ENCODE measurements at regions of chr3 and their contacts with region 1.

Region 1: DNA sequence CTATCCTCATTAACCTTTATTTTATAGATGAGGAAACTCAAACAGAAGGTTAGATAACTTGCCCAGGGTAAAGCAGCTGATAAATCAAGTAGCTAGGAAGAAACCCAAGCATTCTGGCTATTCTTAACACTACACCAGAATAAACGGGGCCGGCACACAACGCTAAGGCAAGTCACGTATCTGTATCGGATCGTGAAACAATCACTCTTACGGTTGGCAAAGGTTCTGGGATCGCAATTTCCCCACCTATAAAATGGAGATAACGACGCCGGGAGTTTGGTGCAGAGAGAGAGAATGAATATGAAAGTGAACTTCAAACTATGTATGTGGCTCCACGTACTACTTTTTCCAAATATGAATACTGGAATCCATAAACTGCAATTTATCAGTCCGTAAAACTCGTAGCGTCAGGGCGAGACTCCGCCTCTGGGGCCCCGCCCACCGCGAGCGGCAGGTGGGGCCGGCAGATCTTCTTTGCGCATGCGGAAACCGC is 252 bp upstream of the ARMC8 start:
- DNase-seq: peak; percentile 82
- H3K4me3 Mint-ChIP-seq: peak overlapping the region; percentile 95
- H3K27ac Mint-ChIP-seq: peak overlapping the region; percentile 89
- H3K4me1 Mint-ChIP-seq: peaks cover 38% of the 10 kb centered on the region
- H3K27me3 Mint-ChIP-seq: peaks cover 5% of the 10 kb centered on the region

Region 2: DNA sequence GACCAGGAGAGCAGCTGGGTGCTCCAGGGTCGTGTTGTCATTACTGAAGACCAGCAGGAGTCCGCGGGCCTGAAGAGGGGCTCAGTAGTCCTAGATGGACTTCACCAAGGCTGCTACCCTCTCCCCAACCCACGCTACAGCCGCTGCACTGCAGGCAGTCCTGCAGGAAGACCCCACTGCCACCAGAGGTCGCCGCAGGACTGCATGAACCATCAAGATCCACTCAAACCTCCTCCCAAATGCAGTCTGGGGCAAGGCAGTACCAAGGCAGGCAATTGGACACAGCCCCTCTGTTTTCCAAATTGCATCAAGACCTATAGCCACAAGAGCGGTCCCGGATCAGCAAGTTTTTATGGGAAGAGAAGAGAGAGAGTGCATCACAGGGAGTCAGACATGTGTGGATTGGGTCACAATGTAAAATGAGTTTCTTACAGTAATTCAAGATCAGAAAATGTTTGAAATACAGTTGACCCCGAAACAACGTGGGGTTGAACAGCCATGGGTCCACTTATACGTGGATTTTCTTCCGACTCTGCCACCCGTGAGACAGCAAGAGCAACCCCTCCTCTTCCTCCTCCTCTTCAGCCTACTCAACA is 118.2 kb before region 1 on chr3:
- intact Hi-C with region 1: loop called (anchors 5 kb)
- DNase-seq: peak; percentile 59
- H3K4me3 Mint-ChIP-seq: no peak overlapping the region
- H3K27ac Mint-ChIP-seq: no peak overlapping the region
- H3K4me1 Mint-ChIP-seq: peaks cover 25% of the 10 kb centered on the region
- H3K27me3 Mint-ChIP-seq: peaks cover 16% of the 10 kb centered on the region

Region 3: GRCh38 chr3:138219255-138219654 is 32.4 kb after region 1 on chr3:
- intact Hi-C with region 1: loop called (anchors 2 kb)
- DNase-seq: no peak
- H3K4me3 Mint-ChIP-seq: no peak overlapping the region
- H3K27ac Mint-ChIP-seq: no peak overlapping the region
- H3K4me1 Mint-ChIP-seq: peaks cover 25% of the 10 kb centered on the region
- H3K27me3 Mint-ChIP-seq: no peaks in the 10 kb centered on the region

Region 4: DNA sequence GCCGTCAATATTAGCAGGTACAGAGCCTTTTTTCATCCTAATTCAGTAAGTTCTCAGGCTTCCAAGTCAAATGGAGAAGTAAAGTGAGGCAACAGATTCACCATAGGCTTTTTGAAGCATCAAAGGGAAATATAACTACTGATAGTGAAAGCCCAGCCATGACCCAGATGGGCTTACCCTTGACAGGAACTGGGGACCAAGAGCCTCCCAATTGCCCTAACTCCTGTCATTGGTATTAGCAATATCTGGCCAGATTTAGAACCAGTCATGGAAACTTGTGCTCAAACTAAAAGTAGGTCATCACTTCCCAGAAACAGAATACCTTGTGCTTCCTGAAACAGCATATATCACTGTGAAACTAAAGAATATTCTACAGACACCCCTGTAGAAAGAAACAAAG is 109.8 kb after region 1 on chr3:
- intact Hi-C with region 1: no loop called
- DNase-seq: no peak
- H3K4me3 Mint-ChIP-seq: no peak overlapping the region
- H3K27ac Mint-ChIP-seq: peak overlapping the region; percentile 64
- H3K4me1 Mint-ChIP-seq: peaks cover 30% of the 10 kb centered on the region
- H3K27me3 Mint-ChIP-seq: no peaks in the 10 kb centered on the region

Region 5: GRCh38 chr3:138329127-138329983 is 142.5 kb after region 1 on chr3 and contains the start of gene NME9:
- intact Hi-C with region 1: loop called (anchors 1 kb)
- DNase-seq: peak; percentile 83
- H3K4me3 Mint-ChIP-seq: peak within 1 kb of the TSS; percentile 87
- H3K27ac Mint-ChIP-seq: peak within 1 kb of the TSS; percentile 68
- H3K4me1 Mint-ChIP-seq: peaks cover 33% of the 10 kb centered on the region
- H3K27me3 Mint-ChIP-seq: peaks cover 2% of the 10 kb centered on the region
- total RNA-seq, gene NME9: not detected in 2 replicates

Region 6: DNA sequence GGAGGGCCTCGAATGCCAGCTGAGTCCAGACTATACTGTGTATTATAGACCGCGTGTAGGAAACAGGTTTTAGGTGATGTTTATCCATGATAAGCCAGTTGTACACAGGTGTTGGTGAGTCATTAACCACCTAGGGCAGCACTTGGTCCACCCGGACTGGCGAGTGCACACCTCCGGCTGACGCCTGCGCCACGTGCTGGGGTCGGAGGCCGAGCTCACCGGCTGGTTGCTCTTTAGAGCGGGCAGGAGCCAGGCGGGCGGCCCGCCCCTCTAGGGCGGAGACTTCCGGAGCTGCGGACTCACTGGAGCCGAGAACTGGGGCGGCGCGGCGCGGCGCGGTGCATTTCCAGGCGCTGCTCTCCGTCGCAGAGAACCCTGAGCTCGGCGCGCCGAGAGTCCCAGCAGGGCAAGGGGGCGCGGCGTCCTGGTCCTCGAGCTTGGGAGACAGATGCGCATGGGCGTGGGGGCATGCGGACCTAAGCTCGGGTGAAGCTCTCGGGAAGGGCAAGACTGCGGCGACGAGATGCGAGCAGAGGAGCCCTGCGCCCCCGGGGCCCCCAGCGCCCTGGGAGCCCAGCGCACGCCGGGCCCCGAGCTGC is 247.5 kb after region 1 on chr3 and contains the start of gene ESYT3:
- intact Hi-C with region 1: loop called (anchors 5 kb)
- DNase-seq: peak; percentile 60
- H3K4me3 Mint-ChIP-seq: peak within 1 kb of the TSS; percentile 73
- H3K27ac Mint-ChIP-seq: no peak within 1 kb of the TSS
- H3K4me1 Mint-ChIP-seq: peaks cover 5% of the 10 kb centered on the region
- H3K27me3 Mint-ChIP-seq: peaks cover 60% of the 10 kb centered on the region
- total RNA-seq, gene ESYT3: 0.34 and 0.44 TPM in 2 replicates

Region 7: GRCh38 chr3:138686771-138687221 is 499.9 kb after region 1 on chr3:
- intact Hi-C with region 1: loop called (anchors 5 kb)
- DNase-seq: no peak
- H3K4me3 Mint-ChIP-seq: no peak overlapping the region
- H3K27ac Mint-ChIP-seq: peak overlapping the region; percentile 56
- H3K4me1 Mint-ChIP-seq: peaks cover 12% of the 10 kb centered on the region
- H3K27me3 Mint-ChIP-seq: no peaks in the 10 kb centered on the region

Region 8: DNA sequence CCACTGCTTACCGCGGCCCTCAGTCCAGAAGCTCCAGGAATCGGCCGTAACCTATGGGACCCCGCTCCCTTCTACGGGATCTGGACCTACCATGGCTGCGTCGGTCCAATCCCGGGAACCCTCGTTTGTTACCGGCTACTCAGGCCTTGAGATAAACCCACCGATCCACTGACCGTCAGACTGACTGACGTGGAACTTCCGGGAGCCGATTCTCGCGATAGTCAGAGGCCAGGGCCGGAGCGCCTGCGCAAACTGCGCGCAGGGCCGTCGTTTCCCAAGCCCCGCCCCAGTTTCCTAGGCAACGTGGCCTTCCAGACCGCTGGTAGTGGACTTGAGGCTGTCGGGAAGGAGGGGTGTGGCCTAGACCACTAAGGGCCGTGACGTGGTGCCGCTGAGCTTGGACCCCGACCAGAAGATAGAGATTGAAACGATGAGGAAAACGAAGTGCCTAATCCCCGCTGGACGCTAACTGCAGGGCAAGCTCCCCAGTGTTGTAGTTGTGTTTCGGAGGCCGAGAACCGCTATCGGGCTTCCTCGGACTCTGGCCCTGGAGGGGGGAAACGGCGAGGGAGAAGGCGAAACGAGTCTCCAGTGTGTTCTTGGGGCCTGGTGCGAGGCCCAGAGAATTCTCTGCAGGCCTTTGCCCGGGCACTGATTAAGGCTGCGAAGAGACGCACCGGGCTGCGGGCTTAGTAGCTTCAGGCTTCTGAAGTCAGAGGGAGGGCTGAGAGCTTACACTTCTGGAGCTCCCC is 1202.8 kb after region 1 on chr3 and contains the start of gene COPB2:
- intact Hi-C with region 1: loop called (anchors 5 kb)
- DNase-seq: peak; percentile 96
- H3K4me3 Mint-ChIP-seq: peak within 1 kb of the TSS; percentile 91
- H3K27ac Mint-ChIP-seq: peak within 1 kb of the TSS; percentile 96
- H3K4me1 Mint-ChIP-seq: peaks cover 52% of the 10 kb centered on the region
- H3K27me3 Mint-ChIP-seq: no peaks in the 10 kb centered on the region
- total RNA-seq, gene COPB2: 96.9 and 103 TPM in 2 replicates